Naive thymus-derived CD4-positive, alpha-beta T cell (primary cell): ENCODE measurements at regions of chr11 and their contacts with region 1.

Region 1: GRCh38 chr11:9757809-9758636 is 94.1 kb downstream of the SWAP70 start:
- DNase-seq: peak; percentile 79 to 97 (median 90)
- ATAC-seq: peak; percentile 94
- H3K4me3 ChIP-seq: peak overlapping the region; percentile 91
- H3K4me3 Mint-ChIP-seq: peak overlapping the region; percentile 77 to 86 (median 84)
- H3K27ac ChIP-seq: peak overlapping the region; percentile 73
- H3K27ac Mint-ChIP-seq: peak overlapping the region; percentile 34 to 91 (median 81)
- H3K4me1 ChIP-seq: peaks cover 7 to 9% of the 10 kb centered on the region in 2 donors
- H3K4me1 Mint-ChIP-seq: peaks cover 12 to 39% (median 18%) of the 10 kb centered on the region in 7 donors
- H3K27me3 ChIP-seq: no peaks in the 10 kb centered on the region
- H3K27me3 Mint-ChIP-seq: no peaks in the 10 kb centered on the region

Region 2: GRCh38 chr11:8682303-8683114 is 1075.5 kb before region 1 on chr11 and contains the starts of genes RPL27A and TRIM66:
- CTCF ChIA-PET with region 1: no interaction called
- POLR2A ChIA-PET with region 1: no interaction called
- intact Hi-C with region 1: loop called in 1 of 2 experiments (anchors 5 kb)
- DNase-seq: peak; percentile 97 to 100 (median 99)
- ATAC-seq: peak; percentile 98
- H3K4me3 ChIP-seq: peak within 1 kb of the TSS; percentile 73
- H3K4me3 Mint-ChIP-seq: peak within 1 kb of the TSS; percentile 89 to 97 (median 96)
- H3K27ac ChIP-seq: peak within 1 kb of the TSS; percentile 99
- H3K27ac Mint-ChIP-seq: peak within 1 kb of the TSS; percentile 97 to 99 (median 98)
- H3K4me1 ChIP-seq: peaks cover 17% of the 10 kb centered on the region in 2 donors
- H3K4me1 Mint-ChIP-seq: peaks cover 30 to 57% (median 43%) of the 10 kb centered on the region in 7 donors
- H3K27me3 ChIP-seq: no peaks in the 10 kb centered on the region
- H3K27me3 Mint-ChIP-seq: no peaks in the 10 kb centered on the region
- total RNA-seq, gene RPL27A: 758 to 2,116 (median 1,670) TPM
- total RNA-seq, gene TRIM66: 16.0 to 37.6 (median 24.2) TPM

Region 3: DNA sequence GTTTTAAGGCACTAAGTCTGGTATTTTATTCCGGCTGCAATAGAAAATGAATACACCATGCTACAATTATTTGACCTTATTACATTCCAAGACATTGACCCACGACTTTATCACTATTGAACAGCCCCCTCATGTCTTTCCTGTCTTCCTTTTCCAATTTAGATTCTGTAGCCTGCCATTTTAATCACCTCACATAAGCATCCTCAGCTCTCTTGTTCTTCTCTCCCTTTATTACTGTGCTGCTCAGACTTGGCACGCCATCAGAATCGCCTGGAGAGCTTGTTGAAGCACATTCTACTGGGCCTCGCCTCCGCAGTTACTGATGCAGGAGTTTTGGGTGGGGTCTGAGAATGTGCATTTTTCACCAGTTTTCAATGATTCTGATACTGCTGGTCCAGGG is 132.9 kb before region 1 on chr11:
- CTCF ChIA-PET with region 1: no interaction called
- POLR2A ChIA-PET with region 1: no interaction called
- intact Hi-C with region 1: no loop called
- DNase-seq: no peak
- ATAC-seq: no peak
- H3K4me3 ChIP-seq: no peak overlapping the region
- H3K4me3 Mint-ChIP-seq: no peak overlapping the region
- H3K27ac ChIP-seq: no peak overlapping the region
- H3K27ac Mint-ChIP-seq: no peak overlapping the region
- H3K4me1 ChIP-seq: no peaks in the 10 kb centered on the region
- H3K4me1 Mint-ChIP-seq: peaks cover 0 to 2% (median 0%) of the 10 kb centered on the region in 7 donors
- H3K27me3 ChIP-seq: no peaks in the 10 kb centered on the region
- H3K27me3 Mint-ChIP-seq: peaks cover 0 to 19% (median 0%) of the 10 kb centered on the region in 5 donors

Region 4: GRCh38 chr11:9663699-9664275 is 94.2 kb before region 1 on chr11 and contains the start of gene SWAP70:
- CTCF ChIA-PET with region 1: no interaction called
- POLR2A ChIA-PET with region 1: no interaction called
- intact Hi-C with region 1: loop called in 1 of 2 experiments (anchors 5 kb)
- DNase-seq: peak; percentile 15 to 89 (median 48)
- ATAC-seq: peak; percentile 91
- H3K4me3 ChIP-seq: peak within 1 kb of the TSS; percentile 58
- H3K4me3 Mint-ChIP-seq: peak within 1 kb of the TSS; percentile 79 to 93 (median 87)
- H3K27ac ChIP-seq: peak within 1 kb of the TSS; percentile 9
- H3K27ac Mint-ChIP-seq: peak within 1 kb of the TSS in 8 of 9 donors; percentile 7 to 81 (median 38)
- H3K4me1 ChIP-seq: peaks cover 5 to 6% of the 10 kb centered on the region in 2 donors
- H3K4me1 Mint-ChIP-seq: peaks cover 7 to 25% (median 17%) of the 10 kb centered on the region in 7 donors
- H3K27me3 ChIP-seq: peaks cover 0 to 4% of the 10 kb centered on the region in 2 donors
- H3K27me3 Mint-ChIP-seq: peaks cover 18 to 51% (median 38%) of the 10 kb centered on the region in 5 donors
- total RNA-seq, gene SWAP70: 4.2 to 15.6 (median 7.0) TPM

Region 5: DNA sequence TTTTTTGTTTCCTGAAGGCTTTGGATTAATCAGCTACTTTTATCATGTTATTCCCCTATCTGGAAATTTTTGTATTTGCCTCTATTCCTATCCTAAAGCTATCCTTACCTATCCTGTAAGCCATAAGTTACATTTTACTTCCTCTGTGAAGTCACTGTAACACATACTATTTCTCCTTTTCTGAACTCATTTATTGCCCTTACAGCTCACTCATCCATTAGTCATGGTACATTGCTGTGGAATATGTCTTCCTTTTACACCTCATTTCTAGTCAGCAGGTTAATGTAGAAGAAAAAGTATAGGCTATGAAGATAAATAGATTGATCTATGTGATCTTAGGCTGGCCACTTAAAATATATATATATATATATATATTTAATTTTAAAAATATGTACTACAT is 66.2 kb before region 1 on chr11:
- CTCF ChIA-PET with region 1: no interaction called
- POLR2A ChIA-PET with region 1: no interaction called
- intact Hi-C with region 1: no loop called
- DNase-seq: no peak
- ATAC-seq: peak; percentile 61
- H3K4me3 ChIP-seq: no peak overlapping the region
- H3K4me3 Mint-ChIP-seq: no peak overlapping the region
- H3K27ac ChIP-seq: no peak overlapping the region
- H3K27ac Mint-ChIP-seq: no peak overlapping the region
- H3K4me1 ChIP-seq: no peaks in the 10 kb centered on the region
- H3K4me1 Mint-ChIP-seq: no peaks in the 10 kb centered on the region
- H3K27me3 ChIP-seq: no peaks in the 10 kb centered on the region
- H3K27me3 Mint-ChIP-seq: peaks cover 0 to 4% (median 0%) of the 10 kb centered on the region in 5 donors

Region 6: GRCh38 chr11:9861860-9862725 is 104.1 kb after region 1 on chr11:
- CTCF ChIA-PET with region 1: interaction called, 3 read pairs
- POLR2A ChIA-PET with region 1: no interaction called
- intact Hi-C with region 1: loop called (anchors 1 to 2 kb)
- DNase-seq: peak in 7 of 9 donors; percentile 5 to 37 (median 31)
- ATAC-seq: peak; percentile 85
- H3K4me3 ChIP-seq: no peak overlapping the region
- H3K4me3 Mint-ChIP-seq: no peak overlapping the region
- H3K27ac ChIP-seq: no peak overlapping the region
- H3K27ac Mint-ChIP-seq: no peak overlapping the region
- H3K4me1 ChIP-seq: peaks cover 0 to 9% of the 10 kb centered on the region in 2 donors
- H3K4me1 Mint-ChIP-seq: peaks cover 9 to 41% (median 27%) of the 10 kb centered on the region in 7 donors
- H3K27me3 ChIP-seq: no peaks in the 10 kb centered on the region
- H3K27me3 Mint-ChIP-seq: no peaks in the 10 kb centered on the region

Region 7: DNA sequence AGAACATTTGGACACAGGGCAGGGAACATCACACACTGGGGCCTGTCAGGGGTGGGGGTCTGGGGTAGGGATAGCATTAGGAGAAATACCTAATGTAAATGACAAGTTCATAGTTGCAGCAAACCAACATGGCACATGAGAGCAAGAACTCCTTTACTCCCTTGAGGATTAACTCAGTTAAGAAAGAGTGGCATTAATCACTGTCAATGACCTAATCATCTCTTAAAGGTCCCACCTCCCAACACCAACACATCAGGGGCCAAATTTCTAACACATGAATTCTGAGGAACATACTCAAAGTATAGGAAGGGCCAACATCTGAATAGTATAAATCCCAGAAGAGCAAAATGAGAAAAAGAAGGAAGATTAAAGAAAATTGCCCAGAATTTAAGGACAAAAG is 178.7 kb after region 1 on chr11:
- CTCF ChIA-PET with region 1: no interaction called
- POLR2A ChIA-PET with region 1: no interaction called
- intact Hi-C with region 1: no loop called
- DNase-seq: no peak
- ATAC-seq: no peak
- H3K4me3 ChIP-seq: no peak overlapping the region
- H3K4me3 Mint-ChIP-seq: no peak overlapping the region
- H3K27ac ChIP-seq: no peak overlapping the region
- H3K27ac Mint-ChIP-seq: no peak overlapping the region
- H3K4me1 ChIP-seq: no peaks in the 10 kb centered on the region
- H3K4me1 Mint-ChIP-seq: peaks cover 0 to 5% (median 0%) of the 10 kb centered on the region in 7 donors
- H3K27me3 ChIP-seq: no peaks in the 10 kb centered on the region
- H3K27me3 Mint-ChIP-seq: no peaks in the 10 kb centered on the region

Region 8: GRCh38 chr11:10076458-10077141 is 318.6 kb after region 1 on chr11:
- CTCF ChIA-PET with region 1: no interaction called
- POLR2A ChIA-PET with region 1: no interaction called
- intact Hi-C with region 1: loop called in 1 of 2 experiments (anchors 2 kb)
- DNase-seq: peak in 2 of 9 donors; percentile 1 to 43
- ATAC-seq: no peak
- H3K4me3 ChIP-seq: no peak overlapping the region
- H3K4me3 Mint-ChIP-seq: no peak overlapping the region
- H3K27ac ChIP-seq: no peak overlapping the region
- H3K27ac Mint-ChIP-seq: no peak overlapping the region
- H3K4me1 ChIP-seq: no peaks in the 10 kb centered on the region
- H3K4me1 Mint-ChIP-seq: peaks cover 0 to 2% (median 0%) of the 10 kb centered on the region in 7 donors
- H3K27me3 ChIP-seq: no peaks in the 10 kb centered on the region
- H3K27me3 Mint-ChIP-seq: no peaks in the 10 kb centered on the region

Region 9: GRCh38 chr11:10322830-10323792 is 565.1 kb after region 1 on chr11:
- CTCF ChIA-PET with region 1: interaction called, 9 read pairs
- POLR2A ChIA-PET with region 1: no interaction called
- intact Hi-C with region 1: loop called (anchors 1 kb)
- DNase-seq: peak in 8 of 9 donors; percentile 10 to 70 (median 48)
- ATAC-seq: peak; percentile 70
- H3K4me3 ChIP-seq: no peak overlapping the region
- H3K4me3 Mint-ChIP-seq: peak overlapping the region in 1 of 10 donors; percentile 26
- H3K27ac ChIP-seq: no peak overlapping the region
- H3K27ac Mint-ChIP-seq: peak overlapping the region in 5 of 9 donors; percentile 16 to 82 (median 55)
- H3K4me1 ChIP-seq: no peaks in the 10 kb centered on the region
- H3K4me1 Mint-ChIP-seq: peaks cover 0 to 11% (median 3%) of the 10 kb centered on the region in 7 donors
- H3K27me3 ChIP-seq: no peaks in the 10 kb centered on the region
- H3K27me3 Mint-ChIP-seq: peaks cover 4 to 20% (median 8%) of the 10 kb centered on the region in 5 donors

Region 10: GRCh38 chr11:10742471-10743208 is 984.6 kb after region 1 on chr11:
- CTCF ChIA-PET with region 1: no interaction called
- POLR2A ChIA-PET with region 1: no interaction called
- intact Hi-C with region 1: loop called in 1 of 2 experiments (anchors 10 kb)
- DNase-seq: peak in 1 of 9 donors; percentile 47
- ATAC-seq: peak; percentile 93
- H3K4me3 ChIP-seq: peak overlapping the region; percentile 18
- H3K4me3 Mint-ChIP-seq: peak overlapping the region in 9 of 10 donors; percentile 5 to 78 (median 69)
- H3K27ac ChIP-seq: no peak overlapping the region
- H3K27ac Mint-ChIP-seq: peak overlapping the region; percentile 7 to 89 (median 65)
- H3K4me1 ChIP-seq: peaks cover 26 to 35% of the 10 kb centered on the region in 2 donors
- H3K4me1 Mint-ChIP-seq: peaks cover 25 to 31% (median 28%) of the 10 kb centered on the region in 7 donors
- H3K27me3 ChIP-seq: no peaks in the 10 kb centered on the region
- H3K27me3 Mint-ChIP-seq: no peaks in the 10 kb centered on the region